Calu3 (cell line): ENCODE measurements at regions of chr21 and their contacts with region 1.

Region 1: DNA sequence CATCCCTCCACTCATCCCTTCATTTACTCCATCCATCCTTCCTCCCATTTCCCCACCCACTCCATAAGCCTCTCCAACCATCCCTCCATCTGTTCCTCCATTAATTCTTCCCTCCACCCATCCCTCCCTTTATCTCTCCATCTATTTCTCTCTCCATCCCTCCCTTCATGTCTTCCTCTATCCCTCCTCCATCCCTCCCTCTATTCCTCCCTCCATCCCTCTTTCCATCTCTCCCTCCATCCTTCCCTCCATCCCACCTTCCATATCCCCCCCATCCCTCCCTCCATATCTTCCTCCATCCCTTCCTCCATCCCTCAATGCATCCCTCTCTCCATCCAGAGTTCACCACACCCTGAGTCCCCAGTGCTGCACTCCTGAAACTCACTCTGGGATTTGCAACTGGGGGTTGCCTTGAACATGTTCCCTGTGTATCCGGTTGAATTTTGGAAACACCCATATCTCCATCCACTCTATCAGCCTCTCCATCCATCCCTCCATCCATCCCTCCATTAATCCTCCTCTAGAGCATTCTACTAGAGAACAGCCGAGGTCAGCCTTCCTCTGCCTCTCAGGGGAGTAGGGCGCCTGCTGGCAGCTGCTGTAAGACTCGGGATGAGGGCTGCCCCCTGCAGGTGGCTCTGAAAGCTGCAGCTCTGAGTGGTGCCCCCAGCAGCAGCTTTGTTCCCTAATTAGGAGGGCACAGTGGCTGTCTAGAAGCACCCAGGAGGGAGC is 39.4 kb downstream of the ABCG1 start:
- DNase-seq: peak; percentile 68
- H3K4me3 Mint-ChIP-seq: no peak overlapping the region
- H3K27ac Mint-ChIP-seq: no peak overlapping the region
- H3K4me1 Mint-ChIP-seq: no peaks in the 10 kb centered on the region
- H3K27me3 Mint-ChIP-seq: peaks cover 58% of the 10 kb centered on the region
- CTCF ChIP-seq: peak; percentile 56

Region 2: GRCh38 chr21:42171091-42172053 is 86.9 kb before region 1 on chr21:
- CTCF ChIA-PET with region 1: no interaction called
- intact Hi-C with region 1: loop called (anchors 5 kb)
- DNase-seq: peak; percentile 68
- H3K4me3 Mint-ChIP-seq: no peak overlapping the region
- H3K27ac Mint-ChIP-seq: peak overlapping the region; percentile 12
- H3K4me1 Mint-ChIP-seq: peaks cover 22% of the 10 kb centered on the region
- H3K27me3 Mint-ChIP-seq: peaks cover 9% of the 10 kb centered on the region
- CTCF ChIP-seq: no peak

Region 3: DNA sequence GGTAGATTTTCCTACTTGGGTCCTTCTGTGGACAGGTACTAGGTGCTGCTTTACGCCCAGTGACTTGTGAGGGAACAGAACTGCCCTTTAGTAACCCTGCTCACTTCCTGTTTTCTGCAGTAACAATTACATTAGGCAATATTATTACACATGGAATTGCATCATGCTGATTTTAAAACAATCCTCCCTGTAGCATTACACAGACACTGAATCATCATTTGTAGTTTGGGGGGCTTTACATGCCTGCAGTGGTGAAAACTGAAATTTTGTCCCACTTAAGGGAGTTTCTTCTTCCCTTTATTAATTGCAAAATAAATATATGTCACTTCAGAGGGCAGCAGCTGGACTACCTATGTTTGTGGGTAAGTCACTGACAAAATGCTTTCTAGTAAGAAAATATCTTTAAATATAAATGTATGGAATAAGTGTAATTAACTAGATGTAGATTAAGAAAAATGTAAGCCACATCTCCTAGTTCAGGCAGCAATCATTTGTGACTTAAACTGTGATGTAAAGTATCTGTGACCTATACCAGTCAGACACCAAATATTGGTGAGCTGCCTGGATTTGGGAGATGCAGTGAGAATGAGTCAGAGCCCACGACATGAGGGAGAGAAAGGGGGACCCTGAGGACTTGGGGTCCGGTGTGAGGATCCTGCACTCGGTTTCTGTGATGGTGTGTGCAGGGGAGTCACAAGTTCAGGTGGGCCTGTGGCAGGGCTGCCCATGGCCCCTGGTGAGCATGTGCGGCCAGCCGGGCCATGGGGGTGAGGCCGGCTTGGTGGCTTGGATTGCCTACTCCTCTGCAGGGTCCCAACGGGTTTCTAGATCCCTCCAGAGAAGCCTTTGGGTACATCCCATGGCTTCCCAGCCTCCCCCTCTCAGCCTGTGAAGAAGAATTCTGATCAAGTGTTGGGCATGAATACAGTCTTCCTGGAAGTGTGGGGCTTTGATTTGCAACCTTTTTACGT is 58.5 kb before region 1 on chr21:
- CTCF ChIA-PET with region 1: no interaction called
- intact Hi-C with region 1: no loop called
- DNase-seq: no peak
- H3K4me3 Mint-ChIP-seq: no peak overlapping the region
- H3K27ac Mint-ChIP-seq: no peak overlapping the region
- H3K4me1 Mint-ChIP-seq: no peaks in the 10 kb centered on the region
- H3K27me3 Mint-ChIP-seq: peaks cover 10% of the 10 kb centered on the region
- CTCF ChIP-seq: no peak

Region 4: GRCh38 chr21:42411191-42411869 is 153.0 kb after region 1 on chr21:
- CTCF ChIA-PET with region 1: no interaction called
- intact Hi-C with region 1: no loop called
- DNase-seq: no peak
- H3K4me3 Mint-ChIP-seq: no peak overlapping the region
- H3K27ac Mint-ChIP-seq: no peak overlapping the region
- H3K4me1 Mint-ChIP-seq: peaks cover 8% of the 10 kb centered on the region
- H3K27me3 Mint-ChIP-seq: no peaks in the 10 kb centered on the region
- CTCF ChIP-seq: no peak